ENCODE measurements at regions of chr16 and their contacts with region 1.

Region 1: GRCh38 chr16:31142109-31143010 is 6.8 kb upstream of the PRSS8 start:
- DNase-seq: peak; percentile 100
- ATAC-seq: peak; percentile 94
- H3K4me3 Mint-ChIP-seq: peak overlapping the region; percentile 63
- H3K27ac Mint-ChIP-seq: peak overlapping the region; percentile 85
- H3K4me1 Mint-ChIP-seq: peaks cover 10% of the 10 kb centered on the region
- H3K27me3 Mint-ChIP-seq: peaks cover 3% of the 10 kb centered on the region

Region 2: GRCh38 chr16:30984669-30985400 is 157.5 kb before region 1 on chr16 and contains the start of gene HSD3B7:
- CTCF ChIA-PET with region 1: interaction called, 31 read pairs
- DNase-seq: peak; percentile 88
- ATAC-seq: peak; percentile 89
- H3K4me3 Mint-ChIP-seq: peak within 1 kb of the TSS; percentile 32
- H3K27ac Mint-ChIP-seq: peak within 1 kb of the TSS; percentile 54
- H3K4me1 Mint-ChIP-seq: peaks cover 15% of the 10 kb centered on the region
- H3K27me3 Mint-ChIP-seq: no peaks in the 10 kb centered on the region
- total RNA-seq, gene HSD3B7: 6.6 to 9.7 TPM

Region 3: DNA sequence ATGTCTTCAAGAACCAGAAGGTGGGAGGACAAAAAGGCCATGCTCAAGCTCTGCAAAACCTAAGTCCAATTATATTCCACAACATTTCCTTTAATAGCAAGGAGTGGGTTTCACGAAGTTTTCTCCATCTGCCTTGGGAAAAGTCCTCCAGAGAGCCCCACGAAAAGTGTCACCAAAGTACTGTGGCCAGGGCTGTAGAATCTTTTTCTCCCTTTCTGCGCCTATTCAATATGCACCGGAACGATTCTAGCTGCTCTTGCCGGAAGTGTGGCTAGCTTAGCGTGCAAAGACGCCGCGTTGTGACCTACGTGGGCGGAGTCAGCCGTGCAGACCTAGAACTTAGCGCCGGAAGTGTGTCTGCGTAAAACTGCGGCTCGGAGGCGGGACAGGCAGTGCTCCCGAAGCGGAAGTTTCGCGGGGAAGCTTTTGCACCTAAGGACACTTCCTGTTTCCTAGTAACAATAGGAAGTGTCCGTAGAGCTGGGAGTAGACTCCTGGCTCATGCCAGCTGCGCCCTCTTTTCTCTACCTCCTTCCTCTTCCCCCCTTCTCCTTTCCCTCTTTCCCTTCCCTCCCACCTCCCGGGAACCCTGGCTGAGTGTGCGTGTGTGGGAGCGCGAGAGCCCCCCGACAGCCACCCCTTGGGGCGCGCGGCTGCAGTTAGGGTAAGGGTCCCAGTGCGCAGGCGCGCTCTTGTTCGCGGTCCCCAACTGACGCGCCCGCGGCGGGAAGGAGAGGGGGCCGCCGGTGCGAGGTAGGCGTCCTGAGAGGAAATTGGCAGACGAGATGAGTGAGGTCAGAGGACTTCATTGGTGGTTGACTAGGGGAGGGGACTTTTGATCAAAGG is 68.2 kb before region 1 on chr16 and contains the starts of genes ZNF646 and ZNF668:
- CTCF ChIA-PET with region 1: interaction called, 19 read pairs
- DNase-seq: peak; percentile 100
- ATAC-seq: peak; percentile 79
- H3K4me3 Mint-ChIP-seq: peak within 1 kb of the TSS; percentile 96
- H3K27ac Mint-ChIP-seq: peak within 1 kb of the TSS; percentile 96
- H3K4me1 Mint-ChIP-seq: peaks cover 45% of the 10 kb centered on the region
- H3K27me3 Mint-ChIP-seq: no peaks in the 10 kb centered on the region
- total RNA-seq, gene ZNF646: 31.8 to 37.7 TPM
- total RNA-seq, gene ZNF668: 18.0 to 20.5 TPM

Region 4: DNA sequence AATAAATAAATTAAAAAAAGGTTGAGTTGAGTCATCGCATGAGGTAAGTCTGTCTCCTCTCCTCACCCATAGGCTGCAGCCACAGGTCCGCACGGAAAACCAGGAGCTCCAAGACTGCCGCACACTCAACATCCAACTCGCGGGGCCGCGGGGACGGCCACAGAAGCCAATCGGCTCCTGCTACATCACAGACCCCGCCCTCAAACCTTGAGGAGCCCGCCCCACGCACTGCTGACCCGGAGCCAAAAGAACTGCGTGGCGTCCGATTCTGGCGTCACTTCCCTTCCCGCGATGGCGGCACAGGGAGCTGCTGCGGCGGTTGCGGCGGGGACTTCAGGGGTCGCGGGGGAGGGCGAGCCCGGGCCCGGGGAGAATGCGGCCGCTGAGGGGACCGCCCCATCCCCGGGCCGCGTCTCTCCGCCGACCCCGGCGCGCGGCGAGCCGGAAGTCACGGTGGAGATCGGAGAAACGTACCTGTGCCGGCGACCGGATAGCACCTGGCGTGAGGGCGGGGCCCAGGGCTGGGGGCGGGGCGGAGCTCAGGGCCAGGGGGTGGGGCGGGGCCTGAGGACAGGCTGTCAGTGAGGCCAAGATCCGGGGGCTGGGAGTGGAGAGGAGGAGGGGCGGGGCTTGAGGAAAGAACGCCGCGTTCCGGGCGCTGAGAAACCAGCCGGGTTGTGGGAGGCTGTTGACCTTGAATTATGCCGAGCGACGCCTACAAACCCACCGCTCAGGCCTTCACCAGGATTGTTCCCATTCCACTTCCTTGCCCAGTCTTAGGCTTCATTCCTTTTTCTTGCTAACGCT is 24.8 kb before region 1 on chr16 and contains the start of gene KAT8:
- CTCF ChIA-PET with region 1: interaction called, 35 read pairs
- DNase-seq: peak; percentile 99
- ATAC-seq: peak; percentile 96
- H3K4me3 Mint-ChIP-seq: peak within 1 kb of the TSS; percentile 87
- H3K27ac Mint-ChIP-seq: peak within 1 kb of the TSS; percentile 83
- H3K4me1 Mint-ChIP-seq: peaks cover 25% of the 10 kb centered on the region
- H3K27me3 Mint-ChIP-seq: no peaks in the 10 kb centered on the region
- total RNA-seq, gene KAT8: 54.8 to 56.1 TPM

Region 5: DNA sequence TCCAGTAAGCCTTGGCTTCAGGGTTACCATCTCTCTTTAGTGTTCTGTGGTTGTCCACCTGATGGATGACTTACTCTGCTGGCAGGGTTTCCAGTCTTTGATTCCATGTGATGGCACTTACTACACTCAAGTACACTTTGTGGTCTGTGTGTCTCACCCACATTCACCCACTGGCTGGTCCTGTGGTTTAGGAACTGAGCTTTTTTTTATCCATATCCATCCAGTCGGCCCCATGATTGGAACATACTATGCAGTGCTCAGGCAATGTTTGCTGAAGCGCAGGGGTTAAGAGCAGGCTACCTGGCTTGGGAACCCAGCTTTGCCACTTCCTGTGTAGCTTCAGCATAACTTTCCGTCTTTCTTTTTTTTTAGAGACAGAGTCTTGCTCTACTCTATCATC is 34.8 kb after region 1 on chr16:
- CTCF ChIA-PET with region 1: interaction called, 19 read pairs
- DNase-seq: peak; percentile 77
- ATAC-seq: peak; percentile 5
- H3K4me3 Mint-ChIP-seq: peak overlapping the region; percentile 46
- H3K27ac Mint-ChIP-seq: peak overlapping the region; percentile 77
- H3K4me1 Mint-ChIP-seq: peaks cover 30% of the 10 kb centered on the region
- H3K27me3 Mint-ChIP-seq: peaks cover 5% of the 10 kb centered on the region

Region 6: GRCh38 chr16:31458844-31459721 is 316.7 kb after region 1 on chr16 and contains the start of gene ARMC5:
- CTCF ChIA-PET with region 1: interaction called, 11 read pairs
- DNase-seq: peak; percentile 99
- ATAC-seq: peak; percentile 73
- H3K4me3 Mint-ChIP-seq: peak within 1 kb of the TSS; percentile 89
- H3K27ac Mint-ChIP-seq: peak within 1 kb of the TSS; percentile 95
- H3K4me1 Mint-ChIP-seq: peaks cover 47% of the 10 kb centered on the region
- H3K27me3 Mint-ChIP-seq: no peaks in the 10 kb centered on the region
- total RNA-seq, gene ARMC5: 19.2 to 22.2 TPM

Measured in activated CD8-positive, alpha-beta memory T cell treated with anti-CD3 and anti-CD28 coated beads, Interleukin-2, amount 10 ng/mL, durations not matched to agents 7 days and 5 days (primary cell).